Activated T-helper 1 cell treated with anti-CD3 and anti-CD28 coated beads, Interleukin-12 subunit alpha, Interleukin-12 subunit beta, Interleukin-2, Interleukin-4 antibody, amounts not matched to agents 30 ng/mL and 10 ng/mL and 1 ng/mL, durations not matched to agents 14 hours and 24 hours and 36 hours (primary cell): ENCODE measurements at regions of chr11 and their contacts with region 1.

Region 1: DNA sequence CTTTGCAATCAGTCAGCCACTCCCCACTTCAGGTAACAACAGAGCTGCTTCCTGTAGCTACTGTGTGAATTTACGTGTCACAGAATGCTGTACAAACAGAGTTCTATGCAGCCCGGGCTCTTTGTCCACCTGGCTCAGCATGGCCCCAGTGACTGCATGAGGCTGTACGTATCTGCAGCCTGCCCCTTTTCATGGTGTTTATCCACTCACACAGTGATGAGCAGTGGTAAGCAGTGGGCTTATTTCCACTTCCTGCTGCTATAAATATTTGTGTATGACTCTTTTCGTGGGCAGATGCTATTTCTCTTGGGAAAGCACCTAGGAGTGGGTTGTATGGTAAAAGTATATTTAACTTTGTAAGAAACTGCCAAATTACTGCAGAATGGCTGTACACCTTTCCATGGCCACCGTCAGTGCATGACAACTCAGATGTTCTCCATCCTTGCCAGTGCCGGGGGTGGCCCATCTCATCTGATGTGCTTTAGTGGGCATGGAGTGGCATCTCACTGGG is 43.3 kb downstream of the MYEOV start:
- DNase-seq: peak; percentile 26
- H3K4me3 Mint-ChIP-seq: peak overlapping the region; percentile 35
- H3K27ac Mint-ChIP-seq: peak overlapping the region; percentile 89
- H3K4me1 Mint-ChIP-seq: peaks cover 56% of the 10 kb centered on the region
- H3K27me3 Mint-ChIP-seq: peaks cover 4% of the 10 kb centered on the region

Region 2: GRCh38 chr11:68810164-68810563 is 527.1 kb before region 1 on chr11:
- intact Hi-C with region 1: no loop called
- DNase-seq: no peak
- H3K4me3 Mint-ChIP-seq: no peak overlapping the region
- H3K27ac Mint-ChIP-seq: no peak overlapping the region
- H3K4me1 Mint-ChIP-seq: no peaks in the 10 kb centered on the region
- H3K27me3 Mint-ChIP-seq: no peaks in the 10 kb centered on the region

Region 3: DNA sequence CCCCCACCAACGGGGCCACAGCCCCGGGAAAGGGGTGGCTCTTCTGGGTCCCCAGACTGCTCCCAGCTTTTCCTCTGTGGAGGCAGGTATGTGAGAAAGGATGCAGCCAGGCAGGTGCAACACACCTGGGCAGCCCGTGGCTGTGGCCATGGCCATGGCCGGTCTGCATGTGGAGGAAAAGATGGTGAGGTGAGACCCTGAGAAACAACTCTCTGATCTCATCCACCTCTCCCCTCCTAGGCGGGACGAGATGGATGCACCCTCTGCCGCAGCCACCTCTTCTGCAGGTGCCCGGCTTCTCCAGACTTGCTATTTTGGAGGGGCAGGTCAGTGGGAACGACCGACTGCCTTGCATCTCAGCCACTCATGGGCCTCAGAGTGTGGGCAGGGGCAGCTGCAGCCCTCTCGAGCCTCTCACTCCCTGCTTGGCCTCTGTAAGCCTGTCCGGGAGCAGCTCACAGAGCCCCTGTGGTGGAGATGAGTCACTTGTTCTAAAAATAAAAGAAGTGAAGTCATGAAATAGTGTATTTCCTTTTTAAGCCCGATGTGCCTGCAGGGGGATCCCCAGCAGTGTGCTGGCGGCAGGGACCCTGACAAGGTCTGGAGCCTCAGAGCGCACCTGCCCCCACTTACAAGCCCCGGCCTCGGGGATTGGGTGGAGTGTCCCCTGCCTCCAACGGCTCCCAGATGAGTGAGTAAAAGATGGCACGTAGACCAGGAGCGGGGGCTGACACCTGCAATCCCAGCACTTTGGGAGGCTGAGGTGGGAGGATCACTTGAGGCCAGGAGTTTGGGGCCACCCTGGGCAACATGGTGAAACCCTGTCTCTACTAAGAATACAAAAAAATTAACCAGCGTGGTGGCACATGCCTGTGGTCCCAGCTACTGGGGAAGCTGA is 170.8 kb before region 1 on chr11:
- intact Hi-C with region 1: loop called (anchors 5 kb)
- DNase-seq: peak; percentile 17
- H3K4me3 Mint-ChIP-seq: peak overlapping the region; percentile 67
- H3K27ac Mint-ChIP-seq: peak overlapping the region; percentile 90
- H3K4me1 Mint-ChIP-seq: peaks cover 24% of the 10 kb centered on the region
- H3K27me3 Mint-ChIP-seq: peaks cover 2% of the 10 kb centered on the region

Region 4: DNA sequence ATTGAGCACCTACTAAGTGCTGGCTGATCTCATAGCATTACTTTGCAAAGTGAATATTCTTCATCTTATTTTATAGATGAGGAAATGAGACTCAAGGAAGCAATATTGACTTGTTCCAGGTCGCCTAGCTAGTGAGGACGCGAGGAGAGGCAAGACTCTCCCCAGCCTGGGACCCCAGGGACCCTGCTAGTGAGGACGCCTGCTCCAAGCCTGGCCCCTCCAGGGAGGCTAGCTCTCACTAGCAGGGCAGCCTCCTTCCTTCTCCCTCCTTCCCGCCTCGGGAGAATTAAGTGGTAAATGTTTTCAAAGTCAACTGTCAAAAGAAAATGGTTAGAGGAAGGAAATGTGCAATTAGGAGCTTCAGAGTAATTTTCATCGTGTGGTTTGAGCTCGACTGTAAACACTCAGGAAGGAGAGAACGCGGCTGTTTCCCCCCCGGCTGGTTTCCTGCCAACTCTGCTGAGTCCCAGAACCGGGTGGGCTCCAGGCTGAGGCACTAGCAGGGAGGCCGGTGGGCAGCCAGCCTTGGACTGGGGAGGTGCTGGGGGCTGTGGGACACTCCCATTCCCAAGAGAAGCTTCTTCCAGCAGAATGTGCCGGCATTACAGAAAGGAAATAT is 25.4 kb before region 1 on chr11:
- intact Hi-C with region 1: loop called (anchors 1 kb)
- DNase-seq: no peak
- H3K4me3 Mint-ChIP-seq: peak overlapping the region; percentile 27
- H3K27ac Mint-ChIP-seq: peak overlapping the region; percentile 90
- H3K4me1 Mint-ChIP-seq: peaks cover 45% of the 10 kb centered on the region
- H3K27me3 Mint-ChIP-seq: no peaks in the 10 kb centered on the region

Region 5: DNA sequence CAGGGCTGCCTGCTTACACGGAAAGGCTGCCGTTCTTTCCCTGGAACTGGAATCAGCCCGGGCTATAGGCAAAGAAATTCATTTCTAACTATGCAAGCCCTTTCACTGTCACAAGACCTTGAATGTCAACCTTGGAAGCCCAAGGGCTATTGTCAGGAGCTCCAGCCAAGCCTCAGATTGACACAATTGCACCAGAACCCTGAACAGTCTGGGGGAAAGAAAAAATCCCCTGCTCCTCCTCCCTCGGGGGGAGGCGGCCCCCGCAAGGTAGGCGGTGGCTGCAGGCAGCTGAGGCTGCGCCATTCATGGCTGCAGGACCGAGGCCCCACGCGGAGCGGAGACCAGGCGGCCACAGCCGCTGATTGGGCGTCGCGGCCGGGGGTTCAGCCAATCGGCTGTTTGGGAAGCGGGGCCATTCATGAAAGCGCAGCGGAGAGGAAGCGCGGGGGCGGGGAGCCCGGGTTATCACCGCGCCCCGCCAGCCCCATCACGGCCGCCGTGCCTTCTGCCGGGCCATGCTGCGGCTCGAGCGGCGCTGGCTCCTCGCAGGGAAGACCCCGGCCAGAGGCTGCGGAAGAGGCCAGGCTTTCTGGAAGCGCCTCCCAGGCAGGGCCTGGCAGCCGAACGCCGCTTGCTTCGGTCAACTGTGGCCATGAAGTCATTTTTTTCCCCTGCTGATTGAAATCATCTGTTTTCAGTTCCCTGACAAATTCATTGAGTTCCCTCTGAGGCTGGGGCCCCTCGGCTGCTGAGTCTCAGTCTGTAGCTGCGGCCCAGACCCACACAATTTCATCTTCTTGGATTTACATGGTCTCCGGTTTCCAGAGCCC is 106.1 kb after region 1 on chr11:
- intact Hi-C with region 1: loop called (anchors 1 kb)
- DNase-seq: peak; percentile 71
- H3K4me3 Mint-ChIP-seq: peak overlapping the region; percentile 63
- H3K27ac Mint-ChIP-seq: peak overlapping the region; percentile 52
- H3K4me1 Mint-ChIP-seq: peaks cover 7% of the 10 kb centered on the region
- H3K27me3 Mint-ChIP-seq: peaks cover 4% of the 10 kb centered on the region

Region 6: GRCh38 chr11:69642913-69643632 is 305.8 kb after region 1 on chr11:
- intact Hi-C with region 1: loop called (anchors 5 kb)
- DNase-seq: peak; percentile 62
- H3K4me3 Mint-ChIP-seq: peak overlapping the region; percentile 73
- H3K27ac Mint-ChIP-seq: no peak overlapping the region
- H3K4me1 Mint-ChIP-seq: no peaks in the 10 kb centered on the region
- H3K27me3 Mint-ChIP-seq: peaks cover 24% of the 10 kb centered on the region

Region 7: GRCh38 chr11:69775163-69775755 is 438.0 kb after region 1 on chr11 and contains the start of gene FGF4:
- intact Hi-C with region 1: no loop called
- DNase-seq: no peak
- H3K4me3 Mint-ChIP-seq: no peak within 1 kb of the TSS
- H3K27ac Mint-ChIP-seq: no peak within 1 kb of the TSS
- H3K4me1 Mint-ChIP-seq: no peaks in the 10 kb centered on the region
- H3K27me3 Mint-ChIP-seq: peaks cover 26% of the 10 kb centered on the region
- total RNA-seq, gene FGF4: not detected in 2 replicates